Naive thymus-derived CD4-positive, alpha-beta T cell (primary cell): ENCODE measurements at regions of chr7 and their contacts with region 1.

Region 1: DNA sequence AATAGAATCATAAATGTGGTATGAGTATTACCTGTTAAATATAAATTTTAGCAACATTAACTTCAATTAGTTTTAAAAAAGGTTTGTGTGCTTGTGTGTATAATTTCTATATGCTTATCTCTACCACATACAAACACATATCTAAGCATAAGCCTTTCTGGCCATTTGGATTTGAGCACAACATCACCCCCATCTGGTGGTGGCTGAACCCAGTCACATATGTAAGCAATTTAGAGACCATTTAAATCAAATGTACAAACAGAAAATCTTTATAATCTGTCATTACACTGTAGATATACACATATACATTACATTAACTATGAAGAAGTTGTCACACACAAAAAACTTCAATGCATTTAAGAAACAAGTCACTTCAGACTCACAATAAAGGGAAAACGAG is 31.7 kb downstream of the GPR22 start:
- DNase-seq: peak in 1 of 9 donors; percentile 4
- ATAC-seq: peak; percentile 50
- H3K4me3 ChIP-seq: no peak overlapping the region
- H3K4me3 Mint-ChIP-seq: no peak overlapping the region
- H3K27ac ChIP-seq: no peak overlapping the region
- H3K27ac Mint-ChIP-seq: peak overlapping the region in 1 of 9 donors; percentile 36
- H3K4me1 ChIP-seq: no peaks in the 10 kb centered on the region
- H3K4me1 Mint-ChIP-seq: peaks cover 6 to 48% (median 26%) of the 10 kb centered on the region in 7 donors
- H3K27me3 ChIP-seq: no peaks in the 10 kb centered on the region
- H3K27me3 Mint-ChIP-seq: no peaks in the 10 kb centered on the region

Region 2: GRCh38 chr7:106793015-106793975 is 708.3 kb before region 1 on chr7:
- CTCF ChIA-PET with region 1: no interaction called
- POLR2A ChIA-PET with region 1: no interaction called
- intact Hi-C with region 1: loop called in 1 of 2 experiments (anchors 1 kb)
- DNase-seq: peak in 6 of 9 donors; percentile 31 to 59 (median 51)
- ATAC-seq: peak; percentile 76
- H3K4me3 ChIP-seq: no peak overlapping the region
- H3K4me3 Mint-ChIP-seq: no peak overlapping the region
- H3K27ac ChIP-seq: no peak overlapping the region
- H3K27ac Mint-ChIP-seq: no peak overlapping the region
- H3K4me1 ChIP-seq: no peaks in the 10 kb centered on the region
- H3K4me1 Mint-ChIP-seq: peaks cover 0 to 4% (median 0%) of the 10 kb centered on the region in 7 donors
- H3K27me3 ChIP-seq: no peaks in the 10 kb centered on the region
- H3K27me3 Mint-ChIP-seq: no peaks in the 10 kb centered on the region

Region 3: DNA sequence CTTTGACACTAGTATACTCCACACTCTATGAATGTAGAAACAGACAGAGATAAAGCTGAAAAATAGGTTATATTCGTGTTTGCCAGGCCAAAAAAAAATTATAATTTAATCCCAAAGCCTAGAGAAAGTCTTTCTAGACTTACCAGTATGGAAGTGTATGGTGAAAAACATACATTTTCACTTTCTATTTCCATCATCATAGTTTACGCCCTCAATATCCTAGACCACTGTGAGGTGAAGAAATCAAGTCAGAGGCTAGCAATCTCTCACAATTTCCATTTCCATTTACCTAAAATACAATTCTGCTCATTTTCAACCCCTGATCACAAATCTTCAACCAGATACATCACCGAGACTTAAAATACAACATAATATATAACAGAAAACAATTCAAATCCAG is 15.6 kb before region 1 on chr7:
- CTCF ChIA-PET with region 1: no interaction called
- POLR2A ChIA-PET with region 1: no interaction called
- intact Hi-C with region 1: loop called in 1 of 2 experiments (anchors 2 kb)
- DNase-seq: no peak
- ATAC-seq: no peak
- H3K4me3 ChIP-seq: no peak overlapping the region
- H3K4me3 Mint-ChIP-seq: peak overlapping the region in 1 of 10 donors; percentile 15
- H3K27ac ChIP-seq: no peak overlapping the region
- H3K27ac Mint-ChIP-seq: peak overlapping the region in 2 of 9 donors; percentile 6 to 25
- H3K4me1 ChIP-seq: peaks cover 0 to 2% of the 10 kb centered on the region in 2 donors
- H3K4me1 Mint-ChIP-seq: peaks cover 7 to 42% (median 18%) of the 10 kb centered on the region in 7 donors
- H3K27me3 ChIP-seq: no peaks in the 10 kb centered on the region
- H3K27me3 Mint-ChIP-seq: no peaks in the 10 kb centered on the region